PC-3 (cell line): ENCODE measurements at regions of chr5 and their contacts with region 1.

Region 1: GRCh38 chr5:31036411-31036810 is 157.1 kb upstream of the CDH6 start:
- DNase-seq: peak; percentile 73
- ATAC-seq: peak; percentile 87
- H3K4me3 ChIP-seq: peak overlapping the region; percentile 35; the same call in 1 of the 2 replicates
- H3K27ac ChIP-seq: peak overlapping the region; percentile 2; the same call in 1 of the 2 replicates
- H3K4me1 ChIP-seq: peaks cover 17% of the 10 kb centered on the region
- H3K27me3 ChIP-seq: no peaks in the 10 kb centered on the region
- CTCF ChIP-seq: no peak

Region 2: GRCh38 chr5:31023105-31023504 is 13.3 kb before region 1 on chr5:
- CTCF ChIA-PET with region 1: no interaction called
- POLR2A ChIA-PET with region 1: no interaction called
- intact Hi-C with region 1: loop called (anchors 2 kb)
- DNase-seq: peak; percentile 87
- ATAC-seq: peak; percentile 81
- H3K4me3 ChIP-seq: no peak overlapping the region
- H3K27ac ChIP-seq: peak overlapping the region; percentile 68
- H3K4me1 ChIP-seq: peaks cover 45% of the 10 kb centered on the region
- H3K27me3 ChIP-seq: no peaks in the 10 kb centered on the region
- CTCF ChIP-seq: no peak

Region 3: DNA sequence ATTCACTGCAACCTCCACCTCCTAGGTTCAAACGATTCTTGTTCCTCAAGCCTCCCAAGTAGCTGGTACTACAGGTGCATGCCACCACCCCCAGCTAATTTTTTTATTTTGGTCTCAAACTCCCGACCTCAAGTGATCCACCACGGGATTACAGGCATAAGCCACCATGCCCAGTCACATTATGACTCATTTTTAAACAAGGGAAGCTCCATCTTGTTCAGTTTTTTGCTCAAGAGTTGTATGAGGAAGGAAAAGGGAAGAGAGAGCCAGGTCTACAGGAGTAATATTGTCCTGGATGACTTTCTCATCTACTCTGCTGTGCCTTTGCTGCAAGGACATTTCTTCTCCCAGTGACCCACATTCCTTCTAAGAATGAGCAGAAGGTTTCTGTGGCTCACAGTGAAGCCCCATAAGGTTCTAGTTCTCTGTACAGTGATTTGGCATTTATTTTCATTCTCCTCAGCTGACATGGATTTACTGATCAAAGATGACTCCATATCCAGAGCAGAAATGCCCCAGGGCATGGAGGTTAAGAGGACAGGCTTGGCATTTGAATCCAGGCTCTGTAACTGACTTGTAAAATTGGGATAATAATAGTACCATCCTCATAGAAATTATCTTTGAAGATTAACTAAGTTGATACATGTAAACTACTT is 310.6 kb after region 1 on chr5:
- CTCF ChIA-PET with region 1: no interaction called
- POLR2A ChIA-PET with region 1: no interaction called
- intact Hi-C with region 1: no loop called
- DNase-seq: no peak
- ATAC-seq: no peak
- H3K4me3 ChIP-seq: no peak overlapping the region
- H3K27ac ChIP-seq: no peak overlapping the region
- H3K4me1 ChIP-seq: no peaks in the 10 kb centered on the region
- H3K27me3 ChIP-seq: peaks cover 66% of the 10 kb centered on the region
- CTCF ChIP-seq: no peak